ENCODE measurements at regions of chr19 and their contacts with region 1.

Region 1: DNA sequence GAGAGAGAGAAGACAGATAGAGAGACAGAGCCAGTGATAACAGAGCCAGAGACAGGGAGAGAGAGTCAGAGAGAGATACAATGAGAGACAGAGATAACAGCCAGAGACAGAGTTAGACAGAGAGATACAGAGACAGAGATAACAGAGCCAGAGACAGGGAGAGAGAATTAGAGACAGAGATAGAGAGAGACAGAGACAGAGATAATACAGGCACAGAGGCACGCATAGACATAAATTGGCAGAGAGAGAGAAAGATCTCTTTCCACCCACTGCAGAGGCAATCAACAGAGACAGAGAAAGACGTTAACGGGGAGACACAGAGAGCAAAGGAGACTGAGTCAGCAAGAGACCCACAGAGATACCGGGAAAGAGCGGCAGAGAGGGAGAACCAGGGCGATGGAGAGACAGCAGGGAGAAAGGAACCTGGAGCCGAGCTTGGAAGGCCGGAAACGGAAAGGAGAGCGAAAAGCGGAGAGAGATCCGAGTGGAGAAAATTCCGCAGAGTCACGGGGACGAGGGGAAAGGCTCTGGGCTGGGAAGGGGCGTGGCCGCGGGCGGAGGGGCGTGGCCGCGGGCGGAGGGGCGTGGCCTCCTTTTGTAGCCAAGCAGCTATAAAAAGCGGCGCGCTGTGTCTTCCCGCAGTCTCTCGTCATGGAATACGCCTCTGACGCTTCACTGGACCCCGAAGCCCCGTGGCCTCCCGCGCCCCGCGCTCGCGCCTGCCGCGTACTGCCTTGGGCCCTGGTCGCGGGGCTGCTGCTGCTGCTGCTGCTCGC is at the start of gene TNFSF9:
- DNase-seq: peak; percentile 87
- H3K4me3 ChIP-seq: peak within 1 kb of the TSS; percentile 63 to 88 (median 77)
- H3K27ac ChIP-seq: peak within 1 kb of the TSS; percentile 90
- H3K4me1 ChIP-seq: peaks cover 11% of the 10 kb centered on the region
- H3K27me3 ChIP-seq: no peaks in the 10 kb centered on the region
- CTCF ChIP-seq: no peak
- total RNA-seq, gene TNFSF9: 9.5 to 15.2 TPM

Region 2: GRCh38 chr19:5809053-5809452 is 721.5 kb before region 1 on chr19:
- CTCF ChIA-PET with region 1: no interaction called
- dilution Hi-C with region 1: no loop called
- in situ Hi-C with region 1: no loop called
- intact Hi-C with region 1: no loop called
- DNase-seq: no peak
- H3K4me3 ChIP-seq: no peak overlapping the region
- H3K27ac ChIP-seq: no peak overlapping the region
- H3K4me1 ChIP-seq: no peaks in the 10 kb centered on the region
- H3K27me3 ChIP-seq: peaks cover 6% of the 10 kb centered on the region
- CTCF ChIP-seq: no peak

Region 3: DNA sequence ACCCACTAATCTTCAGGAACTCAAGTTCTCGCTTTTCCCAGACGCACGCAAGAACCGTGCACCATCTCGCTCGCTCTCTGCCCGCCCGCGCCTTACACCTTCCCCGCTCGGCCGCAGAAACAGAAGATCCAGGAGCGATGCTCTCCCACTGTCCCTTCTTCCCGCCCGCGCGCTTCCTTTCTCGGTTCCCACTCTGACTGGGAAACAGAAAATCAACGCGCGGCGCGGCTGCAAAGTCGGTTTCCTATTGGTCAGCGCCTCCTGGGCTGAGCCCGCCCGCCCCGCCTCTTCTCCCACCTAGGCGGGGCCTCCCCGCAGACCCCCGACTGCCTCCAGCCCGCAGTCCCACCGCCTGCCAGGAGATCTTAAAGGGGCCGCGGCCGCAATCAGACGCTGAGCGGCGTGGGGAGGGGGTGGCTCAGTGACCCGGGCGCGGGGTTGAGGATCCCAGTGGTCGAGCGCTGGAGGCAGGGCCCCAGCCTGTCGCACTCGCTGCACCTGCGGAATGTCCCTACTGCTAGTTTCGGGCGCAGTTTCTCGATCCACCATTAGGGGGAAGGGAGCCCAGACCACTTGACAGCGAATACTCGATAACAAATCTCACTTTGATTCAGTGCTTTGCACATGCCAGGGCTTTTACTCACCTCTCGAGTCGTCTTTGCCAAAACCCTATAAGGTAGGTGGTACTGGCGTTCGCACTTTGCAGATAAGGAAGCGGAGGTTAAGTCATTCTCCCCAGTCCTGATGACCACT is 70.3 kb before region 1 on chr19:
- CTCF ChIA-PET with region 1: no interaction called
- dilution Hi-C with region 1: no loop called
- in situ Hi-C with region 1: no loop called
- intact Hi-C with region 1: no loop called
- DNase-seq: peak; percentile 99
- H3K4me3 ChIP-seq: peak overlapping the region; percentile 47 to 85 (median 58)
- H3K27ac ChIP-seq: peak overlapping the region; percentile 55
- H3K4me1 ChIP-seq: peaks cover 6% of the 10 kb centered on the region
- H3K27me3 ChIP-seq: no peaks in the 10 kb centered on the region
- CTCF ChIP-seq: peak; percentile 36 to 46

Region 4: GRCh38 chr19:6501740-6502648 is 28.6 kb before region 1 on chr19 and contains the start of gene TUBB4A:
- CTCF ChIA-PET with region 1: no interaction called
- dilution Hi-C with region 1: no loop called
- in situ Hi-C with region 1: no loop called
- intact Hi-C with region 1: no loop called
- DNase-seq: no peak
- H3K4me3 ChIP-seq: peak within 1 kb of the TSS in 1 of 3 experiments; percentile 26
- H3K27ac ChIP-seq: no peak within 1 kb of the TSS
- H3K4me1 ChIP-seq: peaks cover 5% of the 10 kb centered on the region
- H3K27me3 ChIP-seq: peaks cover 9% of the 10 kb centered on the region
- CTCF ChIP-seq: no peak
- total RNA-seq, gene TUBB4A: not detected

Region 5: GRCh38 chr19:6572217-6572616 is 41.6 kb after region 1 on chr19:
- CTCF ChIA-PET with region 1: no interaction called
- dilution Hi-C with region 1: no loop called
- in situ Hi-C with region 1: no loop called
- intact Hi-C with region 1: no loop called
- DNase-seq: no peak
- H3K4me3 ChIP-seq: no peak overlapping the region
- H3K27ac ChIP-seq: no peak overlapping the region
- H3K4me1 ChIP-seq: peaks cover 14% of the 10 kb centered on the region
- H3K27me3 ChIP-seq: no peaks in the 10 kb centered on the region
- CTCF ChIP-seq: no peak

Region 6: GRCh38 chr19:6587093-6587820 is 56.7 kb after region 1 on chr19:
- CTCF ChIA-PET with region 1: no interaction called
- dilution Hi-C with region 1: loop called (anchors 5 kb)
- in situ Hi-C with region 1: no loop called
- intact Hi-C with region 1: no loop called
- DNase-seq: peak; percentile 28
- H3K4me3 ChIP-seq: peak overlapping the region in 2 of 3 experiments; percentile 9 to 14
- H3K27ac ChIP-seq: no peak overlapping the region
- H3K4me1 ChIP-seq: peaks cover 18% of the 10 kb centered on the region
- H3K27me3 ChIP-seq: no peaks in the 10 kb centered on the region
- CTCF ChIP-seq: no peak

Measured in mammary epithelial cell (primary cell).